ENCODE measurements at regions of chr7 and their contacts with region 1.

Region 1: DNA sequence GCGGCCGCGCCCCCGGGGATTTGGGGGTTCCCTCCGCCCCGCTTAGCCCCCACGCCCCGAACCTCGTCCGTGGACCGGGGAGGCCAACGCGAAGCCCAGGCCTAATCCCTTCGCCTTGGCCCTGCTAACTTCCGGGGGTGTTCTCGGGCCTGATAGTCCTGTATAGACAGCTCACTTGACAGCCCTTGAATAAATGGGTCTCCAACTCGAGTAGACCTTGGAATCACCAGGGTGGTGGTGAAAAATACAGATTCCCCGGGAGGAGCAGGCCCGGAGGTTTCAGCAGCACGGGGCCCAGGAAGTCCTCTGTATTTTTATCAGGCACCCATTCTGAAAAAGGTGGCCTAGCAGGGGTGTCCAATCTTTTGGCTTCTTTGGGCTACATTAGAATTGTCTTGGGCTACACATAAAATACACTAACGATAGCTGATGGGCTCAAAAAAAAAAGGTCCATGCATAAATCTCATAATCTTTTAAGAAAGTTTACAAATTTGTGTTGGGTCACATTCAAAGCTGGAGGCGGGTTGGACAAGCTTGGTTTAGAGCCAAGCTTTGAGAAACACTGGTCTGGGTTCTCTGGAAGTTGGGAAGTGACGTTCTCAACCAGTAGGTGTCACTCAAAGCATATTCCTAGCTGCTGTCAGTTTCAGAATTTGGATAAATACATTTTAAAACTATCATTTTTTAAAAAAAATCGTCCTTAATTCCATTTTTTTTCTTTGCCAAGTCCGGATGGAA is 221.7 kb downstream of the PHTF2 start:
- DNase-seq: peak in 1 of 2 donors; percentile 76
- H3K4me3 ChIP-seq: peak overlapping the region; percentile 63 to 78
- H3K27ac ChIP-seq: peak overlapping the region; percentile 100
- H3K4me1 ChIP-seq: peaks cover 4 to 10% of the 10 kb centered on the region in 2 donors
- H3K27me3 ChIP-seq: no peaks in the 10 kb centered on the region
- CTCF ChIP-seq: peak; percentile 56 to 70 (median 63)

Region 2: DNA sequence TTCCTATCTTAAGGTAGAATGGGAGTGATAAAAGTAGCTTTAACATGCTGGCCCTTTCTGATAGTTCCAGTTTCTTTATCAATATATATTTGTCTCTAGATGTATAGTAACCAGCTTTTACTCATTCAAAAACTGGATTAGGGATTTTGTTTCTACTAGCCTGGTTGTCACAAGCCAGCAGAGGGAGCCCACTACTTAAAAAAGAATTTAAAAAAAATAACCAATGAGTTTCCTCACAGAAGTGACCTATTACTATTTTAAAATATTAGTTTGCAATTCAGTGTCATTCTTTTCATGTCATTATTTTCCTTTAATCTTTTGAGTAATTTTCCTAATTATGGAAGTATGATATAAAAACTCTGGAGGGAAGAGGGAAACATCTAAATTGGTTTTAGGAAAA is 79.7 kb before region 1 on chr7:
- intact Hi-C with region 1: loop called (anchors 5 kb)
- DNase-seq: no peak
- H3K4me3 ChIP-seq: no peak overlapping the region
- H3K27ac ChIP-seq: no peak overlapping the region
- H3K4me1 ChIP-seq: no peaks in the 10 kb centered on the region
- H3K27me3 ChIP-seq: no peaks in the 10 kb centered on the region
- CTCF ChIP-seq: peak; percentile 26 to 69 (median 50)

Region 3: GRCh38 chr7:78006063-78006755 is 14.1 kb before region 1 on chr7:
- intact Hi-C with region 1: no loop called
- DNase-seq: no peak
- H3K4me3 ChIP-seq: no peak overlapping the region
- H3K27ac ChIP-seq: peak overlapping the region in 1 of 2 donors; percentile 84
- H3K4me1 ChIP-seq: peaks cover 2 to 3% of the 10 kb centered on the region in 2 donors
- H3K27me3 ChIP-seq: no peaks in the 10 kb centered on the region
- CTCF ChIP-seq: no peak

Region 4: DNA sequence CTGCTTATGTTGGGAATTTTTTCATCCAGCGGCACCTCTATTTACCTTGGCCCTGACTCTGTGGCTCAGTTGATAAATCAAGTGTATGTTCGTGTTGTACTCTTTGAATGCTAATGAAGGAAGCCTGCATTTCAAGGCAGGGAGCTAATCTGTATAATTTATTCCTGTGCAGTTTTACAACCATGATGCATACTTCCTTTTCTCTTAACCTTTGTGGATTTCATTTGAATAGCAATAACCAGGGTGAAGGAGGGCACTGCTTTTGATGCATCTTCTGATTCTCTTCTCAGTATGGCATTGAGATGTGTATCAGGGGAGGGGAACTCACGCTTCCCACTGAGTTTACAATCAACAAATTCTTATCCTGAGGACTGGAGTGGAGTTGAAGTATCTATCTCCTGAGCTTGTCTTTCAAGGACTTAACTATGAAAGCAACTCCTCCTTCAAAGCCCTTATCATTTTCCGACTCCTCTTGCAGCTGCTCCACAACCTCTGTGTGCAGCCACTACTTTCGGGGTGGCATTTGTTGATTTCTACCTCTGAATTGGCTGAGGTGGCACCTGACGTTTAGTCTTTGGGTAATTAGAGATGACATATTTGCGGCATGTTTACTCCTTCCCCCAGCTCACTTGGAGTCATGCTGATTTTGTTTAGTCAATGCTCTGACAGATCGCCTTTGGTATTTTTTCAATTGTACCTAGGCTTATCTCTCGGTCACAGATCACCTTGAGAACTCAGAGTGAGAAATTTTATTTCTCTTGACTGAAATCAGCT is 53.5 kb after region 1 on chr7:
- intact Hi-C with region 1: no loop called
- DNase-seq: no peak
- H3K4me3 ChIP-seq: no peak overlapping the region
- H3K27ac ChIP-seq: no peak overlapping the region
- H3K4me1 ChIP-seq: no peaks in the 10 kb centered on the region
- H3K27me3 ChIP-seq: no peaks in the 10 kb centered on the region
- CTCF ChIP-seq: no peak

Region 5: GRCh38 chr7:78226059-78226719 is 205.9 kb after region 1 on chr7:
- intact Hi-C with region 1: loop called (anchors 2 kb)
- DNase-seq: peak in 1 of 2 donors; percentile 74
- H3K4me3 ChIP-seq: no peak overlapping the region
- H3K27ac ChIP-seq: peak overlapping the region in 1 of 2 donors; percentile 55
- H3K4me1 ChIP-seq: peaks cover 0 to 12% of the 10 kb centered on the region in 2 donors
- H3K27me3 ChIP-seq: no peaks in the 10 kb centered on the region
- CTCF ChIP-seq: peak in 2 of 3 experiments; percentile 45 to 49

Region 6: DNA sequence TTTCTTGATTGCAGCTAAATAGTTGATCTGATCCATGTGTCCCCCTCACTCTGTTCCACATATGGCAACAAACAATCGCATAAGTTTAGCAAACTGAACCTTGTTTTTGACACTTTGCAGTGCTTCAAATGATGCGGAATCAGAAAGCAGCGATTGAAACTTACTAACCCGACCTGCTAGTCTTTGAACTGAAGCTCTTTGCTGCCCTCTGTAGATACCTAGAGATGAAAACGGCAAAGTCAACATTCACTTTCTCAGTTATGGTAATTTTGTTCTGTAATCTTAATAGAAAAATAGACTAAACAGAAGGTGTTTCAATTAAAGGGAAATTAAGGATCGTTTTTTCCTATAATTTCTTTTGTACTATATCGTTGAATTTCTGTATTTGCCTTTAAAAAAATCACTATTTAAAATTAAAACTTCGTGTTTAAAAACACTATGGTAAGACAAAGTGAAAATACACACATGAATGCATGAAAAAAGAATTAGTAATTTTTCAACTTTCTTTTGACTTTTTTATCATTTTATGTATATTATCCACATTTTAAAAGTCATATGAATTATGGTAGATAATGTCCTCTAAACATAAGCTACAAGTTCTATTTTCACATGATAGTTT is 1156.7 kb after region 1 on chr7:
- intact Hi-C with region 1: loop called (anchors 2 kb)
- DNase-seq: no peak
- H3K4me3 ChIP-seq: no peak overlapping the region
- H3K27ac ChIP-seq: no peak overlapping the region
- H3K4me1 ChIP-seq: no peaks in the 10 kb centered on the region
- H3K27me3 ChIP-seq: no peaks in the 10 kb centered on the region
- CTCF ChIP-seq: peak; percentile 39 to 65 (median 51)